ENCODE measurements at regions of chr4 and their contacts with region 1.

Region 1: GRCh38 chr4:173334085-173334772 is at the start of gene HMGB2:
- DNase-seq: peak; percentile 100
- ATAC-seq: peak; percentile 88
- total RNA-seq, gene HMGB2: 41.5 to 61.3 TPM

Region 2: GRCh38 chr4:173370477-173371291 is 36.5 kb after region 1 on chr4 and contains the start of gene SAP30:
- intact Hi-C with region 1: loop called in 1 of 2 experiments (anchors 5 kb)
- DNase-seq: peak; percentile 98 to 99
- ATAC-seq: peak; percentile 91
- total RNA-seq, gene SAP30: 6.5 to 7.6 TPM